ENCODE measurements at regions of chr18 and their contacts with region 1.

Region 1: DNA sequence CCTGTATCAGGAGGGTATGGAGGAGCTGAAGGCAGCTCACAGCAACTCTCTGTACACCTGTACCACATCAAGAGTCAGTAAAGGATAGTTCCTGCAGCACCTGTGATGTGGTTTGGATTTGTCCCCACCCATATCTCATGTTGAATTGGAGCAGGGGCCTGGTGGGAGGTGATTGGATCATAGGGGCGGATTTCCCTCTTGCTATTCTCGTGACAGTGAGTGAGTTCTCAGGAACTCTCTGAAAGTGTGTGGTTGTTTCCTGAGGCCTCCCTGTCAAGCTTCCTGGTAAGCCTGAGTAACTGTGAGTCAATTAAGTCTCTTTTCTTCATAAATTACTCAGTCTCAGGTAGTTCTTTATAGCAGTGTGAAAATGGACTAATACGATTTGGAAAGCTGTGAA is 28.9 kb downstream of the OSBPL1A start:
- DNase-seq: peak; percentile 77
- ATAC-seq: peak; percentile 88
- H3K4me3 Mint-ChIP-seq: peak overlapping the region; percentile 22
- H3K27ac Mint-ChIP-seq: peak overlapping the region; percentile 77
- H3K4me1 Mint-ChIP-seq: peaks cover 28% of the 10 kb centered on the region
- H3K27me3 Mint-ChIP-seq: peaks cover 3% of the 10 kb centered on the region

Region 2: DNA sequence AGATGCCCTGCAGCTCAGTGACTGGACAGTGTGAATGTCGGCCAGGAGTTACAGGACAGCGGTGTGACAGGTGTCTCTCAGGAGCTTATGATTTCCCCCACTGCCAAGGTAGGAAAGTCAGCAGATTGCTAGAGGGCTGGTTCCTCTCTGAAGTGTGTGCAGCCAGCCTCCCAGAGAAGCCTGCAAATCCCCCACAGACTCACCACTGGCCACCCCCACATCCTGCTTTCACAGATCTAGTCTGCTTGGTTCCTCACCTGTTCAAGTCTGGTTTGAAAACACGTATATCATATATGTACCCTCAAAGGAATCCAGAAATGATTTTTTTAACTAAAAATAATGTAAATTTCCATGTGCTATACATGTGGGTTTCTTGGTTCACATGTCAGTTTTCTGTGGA is 558.4 kb before region 1 on chr18:
- CTCF ChIA-PET with region 1: no interaction called
- POLR2A ChIA-PET with region 1: no interaction called
- intact Hi-C with region 1: no loop called
- DNase-seq: peak; percentile 56
- ATAC-seq: peak; percentile 88
- H3K4me3 Mint-ChIP-seq: no peak overlapping the region
- H3K27ac Mint-ChIP-seq: no peak overlapping the region
- H3K4me1 Mint-ChIP-seq: peaks cover 13% of the 10 kb centered on the region
- H3K27me3 Mint-ChIP-seq: peaks cover 2% of the 10 kb centered on the region

Region 3: GRCh38 chr18:24426398-24427294 is 57.9 kb after region 1 on chr18 and contains the start of gene IMPACT:
- CTCF ChIA-PET with region 1: interaction called, 10 read pairs
- POLR2A ChIA-PET with region 1: no interaction called
- intact Hi-C with region 1: loop called (anchors 2 kb)
- DNase-seq: peak; percentile 86
- ATAC-seq: peak; percentile 94
- H3K4me3 Mint-ChIP-seq: peak within 1 kb of the TSS; percentile 85
- H3K27ac Mint-ChIP-seq: peak within 1 kb of the TSS; percentile 90
- H3K4me1 Mint-ChIP-seq: peaks cover 29% of the 10 kb centered on the region
- H3K27me3 Mint-ChIP-seq: peaks cover 19% of the 10 kb centered on the region
- total RNA-seq, gene IMPACT: 15.4 to 18.3 TPM